Activated CD8-positive, alpha-beta T cell treated with anti-CD3 and anti-CD28 coated beads, Interleukin-2, amount 10 ng/mL, durations not matched to agents 7 days and 5 days (primary cell): ENCODE measurements at regions of chr19 and their contacts with region 1.

Region 1: GRCh38 chr19:38929929-38930775 is at the start of gene SARS2:
- DNase-seq: peak; percentile 94
- ATAC-seq: peak; percentile 68
- H3K4me3 Mint-ChIP-seq: peak within 1 kb of the TSS; percentile 98
- H3K27ac Mint-ChIP-seq: peak within 1 kb of the TSS; percentile 99
- H3K4me1 Mint-ChIP-seq: peaks cover 31% of the 10 kb centered on the region
- H3K27me3 Mint-ChIP-seq: no peaks in the 10 kb centered on the region
- total RNA-seq, gene SARS2: 36.2 to 36.6 TPM

Region 2: GRCh38 chr19:38634757-38635482 is 295.2 kb before region 1 on chr19:
- CTCF ChIA-PET with region 1: interaction called, 40 read pairs
- POLR2A ChIA-PET with region 1: no interaction called
- DNase-seq: peak; percentile 81
- ATAC-seq: peak; percentile 21
- H3K4me3 Mint-ChIP-seq: no peak overlapping the region
- H3K27ac Mint-ChIP-seq: peak overlapping the region; percentile 83
- H3K4me1 Mint-ChIP-seq: peaks cover 36% of the 10 kb centered on the region
- H3K27me3 Mint-ChIP-seq: no peaks in the 10 kb centered on the region

Region 3: GRCh38 chr19:38831142-38831605 is 99.0 kb before region 1 on chr19:
- CTCF ChIA-PET with region 1: interaction called, 11 read pairs
- POLR2A ChIA-PET with region 1: interaction called, 3 read pairs
- DNase-seq: peak; percentile 51
- ATAC-seq: peak; percentile 35
- H3K4me3 Mint-ChIP-seq: peak overlapping the region; percentile 92
- H3K27ac Mint-ChIP-seq: peak overlapping the region; percentile 88
- H3K4me1 Mint-ChIP-seq: peaks cover 33% of the 10 kb centered on the region
- H3K27me3 Mint-ChIP-seq: no peaks in the 10 kb centered on the region

Region 4: GRCh38 chr19:38862321-38863059 is 67.7 kb before region 1 on chr19:
- CTCF ChIA-PET with region 1: interaction called, 11 read pairs
- POLR2A ChIA-PET with region 1: no interaction called
- DNase-seq: no peak
- ATAC-seq: no peak
- H3K4me3 Mint-ChIP-seq: no peak overlapping the region
- H3K27ac Mint-ChIP-seq: no peak overlapping the region
- H3K4me1 Mint-ChIP-seq: peaks cover 52% of the 10 kb centered on the region
- H3K27me3 Mint-ChIP-seq: no peaks in the 10 kb centered on the region

Region 5: GRCh38 chr19:38891771-38892170 is 38.4 kb before region 1 on chr19:
- CTCF ChIA-PET with region 1: interaction called, 14 read pairs
- POLR2A ChIA-PET with region 1: no interaction called
- DNase-seq: no peak
- ATAC-seq: no peak
- H3K4me3 Mint-ChIP-seq: no peak overlapping the region
- H3K27ac Mint-ChIP-seq: no peak overlapping the region
- H3K4me1 Mint-ChIP-seq: peaks cover 4% of the 10 kb centered on the region
- H3K27me3 Mint-ChIP-seq: no peaks in the 10 kb centered on the region

Region 6: DNA sequence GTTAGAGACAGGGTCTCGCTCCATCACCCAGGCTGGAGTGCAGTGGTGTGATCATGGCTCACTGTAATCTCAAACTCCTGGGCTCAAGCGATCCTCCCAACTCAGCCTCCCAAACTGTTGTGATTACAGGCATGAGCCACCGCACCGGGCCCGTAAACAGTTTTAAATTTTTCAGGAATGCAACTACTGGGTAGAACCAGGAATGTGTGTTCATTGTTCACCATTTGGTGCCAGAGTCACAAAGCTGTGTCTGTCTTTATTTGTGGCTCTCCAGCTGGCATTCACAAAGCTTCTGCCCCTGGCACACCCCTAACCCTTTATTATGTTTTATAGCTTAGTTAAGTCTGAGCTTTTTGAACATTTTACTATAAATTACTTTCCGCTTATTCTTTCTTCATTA is 134.3 kb after region 1 on chr19:
- CTCF ChIA-PET with region 1: no interaction called
- POLR2A ChIA-PET with region 1: no interaction called
- DNase-seq: no peak
- ATAC-seq: no peak
- H3K4me3 Mint-ChIP-seq: no peak overlapping the region
- H3K27ac Mint-ChIP-seq: no peak overlapping the region
- H3K4me1 Mint-ChIP-seq: peaks cover 9% of the 10 kb centered on the region
- H3K27me3 Mint-ChIP-seq: peaks cover 8% of the 10 kb centered on the region

Region 7: GRCh38 chr19:39110263-39110967 is 180.3 kb after region 1 on chr19:
- CTCF ChIA-PET with region 1: no interaction called
- POLR2A ChIA-PET with region 1: no interaction called
- DNase-seq: peak; percentile 81
- ATAC-seq: peak; percentile 82
- H3K4me3 Mint-ChIP-seq: no peak overlapping the region
- H3K27ac Mint-ChIP-seq: peak overlapping the region; percentile 13
- H3K4me1 Mint-ChIP-seq: peaks cover 7% of the 10 kb centered on the region
- H3K27me3 Mint-ChIP-seq: no peaks in the 10 kb centered on the region